ENCODE measurements at regions of chr1 and their contacts with region 1.

Region 1: DNA sequence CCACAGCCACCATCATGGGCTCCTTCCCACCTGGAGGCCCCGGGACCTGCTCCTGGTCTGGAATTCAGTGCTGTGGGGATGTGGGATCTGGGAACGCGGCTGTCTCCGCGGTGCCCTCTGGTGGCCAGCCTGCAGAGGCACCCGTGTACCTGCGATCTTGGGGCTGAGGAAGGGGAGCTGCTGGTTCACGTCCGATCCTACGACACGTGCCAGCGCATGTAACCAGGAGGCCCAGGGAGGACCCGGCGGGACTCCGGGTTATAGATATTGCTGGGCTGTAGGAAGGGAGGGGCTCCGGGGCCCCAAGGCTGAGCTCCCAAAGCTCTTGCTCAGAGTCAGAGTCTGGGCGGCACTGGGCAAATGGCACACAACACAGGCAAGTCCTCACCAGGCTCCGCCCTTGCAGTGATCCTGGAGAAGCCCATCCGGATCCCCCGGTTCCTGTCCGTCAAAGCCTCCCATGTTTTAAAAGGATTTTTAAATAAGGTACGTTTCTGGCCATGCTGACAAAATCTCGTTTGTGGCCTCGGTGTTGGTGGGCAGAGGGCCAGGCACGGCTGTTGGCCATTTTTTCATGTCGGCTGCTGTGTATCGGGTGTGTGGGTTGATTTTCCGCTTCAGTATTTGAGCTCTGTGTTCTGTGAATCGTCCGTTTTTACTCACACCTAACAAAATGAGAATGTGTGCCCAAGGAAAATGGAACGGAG is 20.1 kb downstream of the FAAP20 start:
- DNase-seq: peak; percentile 55
- H3K4me3 Mint-ChIP-seq: no peak overlapping the region
- H3K27ac Mint-ChIP-seq: no peak overlapping the region
- H3K4me1 Mint-ChIP-seq: peaks cover 2% of the 10 kb centered on the region
- H3K27me3 Mint-ChIP-seq: no peaks in the 10 kb centered on the region

Region 2: GRCh38 chr1:2042830-2043773 is 131.4 kb before region 1 on chr1:
- CTCF ChIA-PET with region 1: no interaction called
- DNase-seq: no peak
- H3K4me3 Mint-ChIP-seq: no peak overlapping the region
- H3K27ac Mint-ChIP-seq: no peak overlapping the region
- H3K4me1 Mint-ChIP-seq: peaks cover 12% of the 10 kb centered on the region
- H3K27me3 Mint-ChIP-seq: peaks cover 49% of the 10 kb centered on the region

Region 3: GRCh38 chr1:2091611-2092604 is 82.6 kb before region 1 on chr1:
- CTCF ChIA-PET with region 1: interaction called, 17 read pairs
- DNase-seq: peak; percentile 71
- H3K4me3 Mint-ChIP-seq: no peak overlapping the region
- H3K27ac Mint-ChIP-seq: no peak overlapping the region
- H3K4me1 Mint-ChIP-seq: no peaks in the 10 kb centered on the region
- H3K27me3 Mint-ChIP-seq: peaks cover 3% of the 10 kb centered on the region

Region 4: GRCh38 chr1:2121101-2121691 is 53.3 kb before region 1 on chr1:
- CTCF ChIA-PET with region 1: no interaction called
- DNase-seq: no peak
- H3K4me3 Mint-ChIP-seq: no peak overlapping the region
- H3K27ac Mint-ChIP-seq: no peak overlapping the region
- H3K4me1 Mint-ChIP-seq: peaks cover 6% of the 10 kb centered on the region
- H3K27me3 Mint-ChIP-seq: peaks cover 2% of the 10 kb centered on the region

Region 5: DNA sequence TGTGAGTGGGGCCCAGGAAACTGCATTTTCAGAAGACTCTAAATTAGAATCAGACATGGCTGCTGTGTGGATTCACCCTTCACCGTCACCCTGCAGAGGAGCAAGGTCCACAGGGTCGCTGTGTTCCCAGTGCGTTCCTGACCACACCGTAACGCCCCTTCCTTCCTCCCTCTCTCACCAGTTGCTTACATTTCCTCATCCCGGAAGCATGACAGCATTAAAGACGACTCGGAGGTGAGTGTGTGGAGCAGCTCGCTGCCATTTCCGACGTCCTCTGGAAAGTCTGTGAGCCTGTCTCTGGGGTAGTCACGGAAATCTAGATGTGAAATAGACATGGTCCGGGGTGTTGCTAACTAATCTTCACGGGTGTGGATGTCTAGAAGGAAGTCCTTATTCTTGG is 25.8 kb before region 1 on chr1:
- CTCF ChIA-PET with region 1: interaction called, 10 read pairs
- DNase-seq: peak; percentile 85
- H3K4me3 Mint-ChIP-seq: no peak overlapping the region
- H3K27ac Mint-ChIP-seq: no peak overlapping the region
- H3K4me1 Mint-ChIP-seq: peaks cover 25% of the 10 kb centered on the region
- H3K27me3 Mint-ChIP-seq: no peaks in the 10 kb centered on the region

Region 6: DNA sequence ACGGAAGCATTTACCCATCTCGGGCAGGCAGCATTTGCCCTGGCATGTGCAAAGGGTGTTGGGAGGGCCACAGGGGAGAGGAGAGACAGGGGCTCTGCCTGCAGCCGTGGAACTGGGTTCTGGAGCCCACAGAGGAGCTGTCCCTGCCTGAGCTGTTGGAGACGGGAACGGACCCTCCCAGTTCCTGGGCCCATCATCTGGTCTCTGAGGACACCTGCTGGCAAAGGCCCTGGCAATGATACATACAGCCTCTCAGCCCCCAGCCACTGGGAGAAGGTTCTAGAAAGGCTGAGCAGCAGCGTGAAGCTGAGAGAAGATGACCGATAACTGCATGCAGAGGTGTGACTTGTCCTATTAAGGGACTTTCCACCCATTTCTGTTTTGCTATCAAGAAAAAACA is 11.3 kb before region 1 on chr1:
- CTCF ChIA-PET with region 1: interaction called, 13 read pairs
- DNase-seq: peak; percentile 30
- H3K4me3 Mint-ChIP-seq: no peak overlapping the region
- H3K27ac Mint-ChIP-seq: no peak overlapping the region
- H3K4me1 Mint-ChIP-seq: peaks cover 10% of the 10 kb centered on the region
- H3K27me3 Mint-ChIP-seq: no peaks in the 10 kb centered on the region

Measured in activated naive CD4-positive, alpha-beta T cell treated with anti-CD3 and anti-CD28 coated beads, Interleukin-2, amount 10 ng/mL, durations not matched to agents 7 days and 5 days (primary cell).